Spleen (tissue), 13 donors: ENCODE measurements at regions of chr2 and their contacts with region 1.

Region 1: GRCh38 chr2:47867205-47867604 is 39.1 kb downstream of the FBXO11 start:
- DNase-seq: no peak
- H3K4me3 ChIP-seq: no peak overlapping the region
- H3K27ac ChIP-seq: peak overlapping the region in 5 of 8 donors; percentile 12 to 50 (median 45)
- H3K4me1 ChIP-seq: peaks cover 35 to 100% (median 79%) of the 10 kb centered on the region in 6 donors
- H3K27me3 ChIP-seq: no peaks in the 10 kb centered on the region
- CTCF ChIP-seq: no peak
- POLR2A ChIP-seq: no peak

Region 2: DNA sequence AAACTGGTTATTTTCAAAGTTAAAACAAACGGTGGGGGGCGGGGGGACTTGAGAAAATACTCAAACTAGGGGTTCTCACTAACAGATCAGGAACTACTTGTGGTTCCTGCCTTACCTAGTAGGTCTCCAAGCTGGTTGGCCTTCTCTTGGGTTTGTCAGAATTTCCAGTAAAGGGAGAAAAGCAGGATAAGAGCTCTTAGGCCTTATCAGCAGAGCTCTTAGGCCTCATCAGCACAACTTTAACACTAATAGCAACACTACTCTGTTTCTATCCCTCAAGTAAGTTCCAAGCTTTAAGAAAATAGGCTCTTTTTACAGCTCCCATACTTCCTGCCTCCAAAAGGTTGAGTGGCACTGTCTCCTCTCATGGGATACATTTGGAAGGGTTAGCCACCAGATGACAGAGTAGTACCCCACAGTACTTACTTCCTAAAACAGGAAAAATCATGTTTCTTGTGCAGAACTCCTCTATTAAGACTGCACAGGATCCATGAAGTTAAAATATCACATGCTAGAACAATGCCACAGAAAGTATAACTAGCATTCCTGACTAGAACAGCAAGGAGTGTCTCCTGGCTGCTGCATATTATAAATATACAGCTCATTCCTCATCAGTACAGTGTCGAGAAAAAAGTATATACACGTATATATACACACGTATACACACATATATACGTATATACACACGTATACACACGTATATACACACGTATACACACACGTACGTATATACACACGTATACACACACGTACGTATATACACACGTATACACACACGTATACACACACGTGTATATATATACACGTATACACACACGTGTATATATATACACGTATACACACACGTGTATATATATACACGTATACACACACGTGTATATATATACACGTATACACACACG is 33.0 kb after region 1 on chr2:
- intact Hi-C with region 1: loop called (anchors 2 kb)
- DNase-seq: no peak
- H3K4me3 ChIP-seq: peak overlapping the region in 1 of 8 donors; percentile 9
- H3K27ac ChIP-seq: peak overlapping the region; percentile 22 to 61 (median 48)
- H3K4me1 ChIP-seq: peaks cover 62 to 90% (median 80%) of the 10 kb centered on the region in 6 donors
- H3K27me3 ChIP-seq: no peaks in the 10 kb centered on the region
- CTCF ChIP-seq: no peak
- POLR2A ChIP-seq: no peak

Region 3: DNA sequence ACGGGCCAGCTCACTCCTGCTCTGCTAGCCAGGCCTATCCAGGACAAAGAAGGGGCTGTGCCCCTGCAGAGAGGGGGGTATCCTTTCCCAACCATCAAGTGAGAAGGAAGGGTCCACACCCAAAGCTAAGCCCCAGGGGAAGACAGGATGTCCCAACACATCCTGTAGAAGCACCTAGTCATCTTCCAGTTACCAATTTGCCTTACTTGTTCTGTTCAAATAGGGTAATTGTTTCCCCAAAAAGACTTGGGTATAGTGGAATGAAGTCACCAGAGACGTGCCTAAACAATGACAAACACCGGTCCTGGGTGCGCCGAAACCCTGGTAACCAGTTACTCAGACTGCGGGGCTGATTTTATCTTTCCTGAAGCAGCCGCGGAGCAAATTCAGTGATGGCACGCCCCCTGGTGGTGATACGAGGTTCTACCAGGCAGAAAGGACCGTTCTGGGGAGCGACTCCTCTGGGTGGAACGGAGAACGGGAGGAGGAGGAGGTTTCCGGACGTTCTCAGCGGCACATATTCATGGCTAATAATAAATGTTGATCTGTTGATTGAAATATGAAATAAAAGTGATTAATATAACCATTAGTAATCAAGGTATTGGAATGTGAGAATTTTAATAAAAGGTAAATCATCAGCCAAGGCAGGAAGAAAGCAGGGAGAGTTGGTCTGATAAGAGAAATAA is 553.5 kb after region 1 on chr2:
- intact Hi-C with region 1: loop called (anchors 10 kb)
- DNase-seq: peak; percentile 96
- H3K4me3 ChIP-seq: peak overlapping the region in 1 of 8 donors; percentile 52
- H3K27ac ChIP-seq: peak overlapping the region in 5 of 8 donors; percentile 5 to 74 (median 59)
- H3K4me1 ChIP-seq: peaks cover 10 to 41% (median 25%) of the 10 kb centered on the region in 6 donors
- H3K27me3 ChIP-seq: no peaks in the 10 kb centered on the region
- CTCF ChIP-seq: peak; percentile 96 to 99 (median 97)
- POLR2A ChIP-seq: no peak